ENCODE measurements at regions of chr20 and their contacts with region 1.

Region 1: DNA sequence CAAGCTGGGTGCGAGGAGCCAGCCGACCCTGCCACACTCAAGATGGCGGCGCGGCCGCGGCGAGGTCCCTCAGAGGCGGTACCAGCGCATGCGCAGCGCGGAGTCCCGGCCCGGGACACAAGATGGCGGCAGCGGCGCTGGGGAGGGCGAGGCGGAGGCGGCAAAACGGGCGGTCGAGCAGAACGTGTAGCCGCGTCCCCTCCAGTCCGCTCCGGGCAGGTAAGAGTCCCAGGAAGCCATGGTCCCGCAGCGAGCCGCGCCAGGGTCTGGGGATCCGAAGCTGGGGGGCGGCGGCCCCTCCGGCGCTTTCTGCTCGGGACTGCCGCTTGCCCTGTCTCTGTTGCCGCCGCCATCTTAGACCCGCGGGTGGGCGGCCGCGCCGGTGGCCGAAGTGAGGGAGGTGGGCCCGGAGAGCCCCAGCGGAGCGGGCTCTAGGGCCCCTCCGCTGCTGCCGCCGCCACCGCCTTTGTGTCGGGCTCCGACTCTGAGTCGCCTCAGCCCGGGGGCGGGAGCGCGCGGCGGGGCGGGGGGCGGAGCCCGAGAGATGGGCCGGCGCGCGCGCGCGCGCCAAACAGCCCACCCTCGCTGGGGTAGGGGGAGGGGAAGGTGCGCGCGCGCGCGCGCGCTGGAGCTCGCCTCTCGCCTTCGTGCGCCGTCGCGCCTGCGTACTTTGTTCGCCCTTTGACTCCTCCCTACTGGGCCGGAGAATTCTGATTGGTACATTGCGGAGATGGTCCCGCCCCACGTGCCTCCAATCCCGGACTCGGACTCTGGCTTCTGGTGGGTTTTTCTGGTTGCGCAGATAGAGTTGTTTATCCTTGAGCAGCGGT is at the start of gene PCIF1:
- DNase-seq: peak; percentile 91 to 99
- H3K4me3 ChIP-seq: peak within 1 kb of the TSS; percentile 76 to 91 (median 86)
- H3K27ac ChIP-seq: peak within 1 kb of the TSS; percentile 100
- H3K4me1 ChIP-seq: peaks cover 5 to 31% (median 14%) of the 10 kb centered on the region in 4 experiments
- H3K27me3 ChIP-seq: no peaks in the 10 kb centered on the region
- CTCF ChIP-seq: no peak; a peak in 1 of 4 replicates
- EP300 ChIP-seq: peak in 1 of 2 experiments; percentile 21; a peak in 1 of 3 replicates
- POLR2A ChIP-seq: peak; percentile 94 to 95
- RAD21 ChIP-seq: no peak
- total RNA-seq, gene PCIF1: 27.2 and 30.3 TPM in 2 replicates

Region 2: GRCh38 chr20:45798935-45799642 is 135.7 kb before region 1 on chr20:
- CTCF ChIA-PET with region 1: interaction called, 17 read pairs
- POLR2A ChIA-PET with region 1: interaction called, 3 read pairs
- DNase-seq: peak; percentile 36 to 81
- H3K4me3 ChIP-seq: no peak overlapping the region
- H3K27ac ChIP-seq: no peak overlapping the region
- H3K4me1 ChIP-seq: no peaks in the 10 kb centered on the region; a peak in 1 of 7 replicates
- H3K27me3 ChIP-seq: no peaks in the 10 kb centered on the region
- CTCF ChIP-seq: peak; percentile 67 to 90 (median 82)
- EP300 ChIP-seq: no peak
- POLR2A ChIP-seq: no peak
- RAD21 ChIP-seq: peak; percentile 68 to 83

Region 3: GRCh38 chr20:45842169-45842812 is 92.5 kb before region 1 on chr20:
- CTCF ChIA-PET with region 1: no interaction called
- POLR2A ChIA-PET with region 1: interaction called, 11 read pairs
- DNase-seq: no peak
- H3K4me3 ChIP-seq: no peak overlapping the region
- H3K27ac ChIP-seq: no peak overlapping the region
- H3K4me1 ChIP-seq: no peaks in the 10 kb centered on the region
- H3K27me3 ChIP-seq: no peaks in the 10 kb centered on the region
- CTCF ChIP-seq: no peak
- EP300 ChIP-seq: no peak
- POLR2A ChIP-seq: no peak
- RAD21 ChIP-seq: no peak

Region 4: DNA sequence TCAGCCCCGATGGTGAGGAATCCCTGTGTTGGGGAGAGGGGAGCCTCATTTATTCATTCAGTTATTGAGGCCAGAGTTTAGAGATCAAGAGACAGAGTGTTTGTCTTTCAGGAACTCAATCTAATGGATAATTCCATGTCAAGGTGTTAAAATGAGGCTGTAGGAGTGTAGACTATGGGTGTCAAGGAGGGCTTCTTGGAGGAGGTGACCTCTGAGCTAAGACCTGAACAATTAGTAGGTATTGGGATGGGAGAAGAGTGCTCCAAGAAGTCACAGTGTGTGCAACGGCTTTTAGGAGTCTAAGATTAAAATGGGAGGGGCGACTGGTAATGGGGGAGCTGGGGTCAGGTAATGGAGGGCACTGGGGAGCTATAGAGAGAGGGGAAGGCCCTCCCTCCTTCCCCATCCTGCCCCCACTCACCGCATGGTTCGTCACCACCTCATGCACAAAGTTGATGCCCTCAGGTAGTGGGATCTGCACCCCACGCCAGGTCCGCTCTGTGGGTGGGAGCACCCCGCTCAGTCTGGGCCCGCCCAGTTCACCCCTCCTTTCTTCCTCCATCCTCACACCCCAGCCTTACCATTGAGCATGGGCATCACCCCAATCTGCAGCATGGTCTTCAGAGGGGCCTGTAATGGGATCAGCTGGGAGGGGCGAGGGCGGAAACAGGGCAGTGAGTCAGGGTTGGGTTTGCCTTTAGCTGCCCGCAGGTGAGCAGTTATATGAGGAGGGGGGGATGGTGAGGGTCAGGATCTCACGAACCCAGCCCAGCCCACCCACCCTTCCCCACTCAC is 35.6 kb before region 1 on chr20:
- CTCF ChIA-PET with region 1: no interaction called
- POLR2A ChIA-PET with region 1: interaction called, 40 read pairs
- DNase-seq: no peak
- H3K4me3 ChIP-seq: no peak overlapping the region
- H3K27ac ChIP-seq: no peak overlapping the region
- H3K4me1 ChIP-seq: no peaks in the 10 kb centered on the region
- H3K27me3 ChIP-seq: no peaks in the 10 kb centered on the region
- CTCF ChIP-seq: no peak
- EP300 ChIP-seq: no peak
- POLR2A ChIP-seq: no peak
- RAD21 ChIP-seq: no peak

Region 5: GRCh38 chr20:45924391-45925261 is 10.2 kb before region 1 on chr20:
- CTCF ChIA-PET with region 1: interaction called, 4 read pairs
- POLR2A ChIA-PET with region 1: interaction called, 165 read pairs
- DNase-seq: no peak
- H3K4me3 ChIP-seq: no peak overlapping the region
- H3K27ac ChIP-seq: no peak overlapping the region
- H3K4me1 ChIP-seq: peaks cover 3 to 7% (median 5%) of the 10 kb centered on the region in 4 experiments; a peak in 5 of 7 replicates
- H3K27me3 ChIP-seq: no peaks in the 10 kb centered on the region
- CTCF ChIP-seq: no peak
- EP300 ChIP-seq: no peak
- POLR2A ChIP-seq: no peak
- RAD21 ChIP-seq: no peak

Region 6: DNA sequence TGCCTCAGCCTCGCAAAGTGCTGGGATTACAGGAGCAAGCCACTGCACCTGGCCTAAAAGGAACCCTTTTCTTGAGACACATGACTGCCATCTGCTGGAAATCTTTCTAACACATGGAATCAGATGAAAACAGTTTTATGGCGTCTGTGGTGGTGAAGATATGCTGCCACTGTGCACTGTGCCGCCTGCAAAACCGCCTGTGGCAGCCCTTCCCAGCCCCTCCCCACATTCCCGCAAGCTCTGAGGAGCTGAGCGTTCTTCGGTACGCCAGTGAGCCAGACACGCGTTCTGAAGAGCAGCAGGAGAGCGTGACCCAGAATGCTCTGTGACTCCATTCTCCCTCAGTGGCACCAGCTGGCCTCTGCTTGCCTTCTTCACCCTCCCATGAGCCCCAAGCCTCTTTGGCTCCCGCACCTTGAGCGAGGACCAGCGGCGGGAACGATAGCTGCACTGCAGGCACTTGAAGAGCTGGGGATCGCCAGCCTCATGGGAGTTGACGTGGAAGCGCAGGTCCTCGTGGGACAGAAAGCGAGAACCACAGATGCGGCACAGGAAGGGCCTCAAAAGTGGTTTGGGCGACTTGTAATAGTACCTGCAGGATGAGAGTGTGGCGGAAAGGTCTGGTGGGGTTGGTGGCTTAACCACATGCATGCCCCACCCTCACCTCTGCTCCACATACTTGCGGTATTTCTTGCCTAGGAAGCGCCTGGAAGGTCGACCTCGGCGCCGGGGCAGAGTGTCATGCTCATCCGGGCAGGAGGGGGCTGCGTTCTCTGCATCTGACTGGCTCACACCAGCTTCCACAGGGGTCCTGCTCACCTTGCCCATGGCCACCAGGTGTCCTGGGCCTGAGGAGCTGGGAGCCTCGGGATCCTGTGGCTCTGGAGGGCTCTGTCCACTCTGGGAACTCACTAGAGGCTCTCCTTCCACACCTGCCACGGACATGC is 28.5 kb after region 1 on chr20:
- CTCF ChIA-PET with region 1: interaction called, 9 read pairs
- POLR2A ChIA-PET with region 1: interaction called, 43 read pairs
- DNase-seq: no peak
- H3K4me3 ChIP-seq: no peak overlapping the region
- H3K27ac ChIP-seq: no peak overlapping the region
- H3K4me1 ChIP-seq: no peaks in the 10 kb centered on the region
- H3K27me3 ChIP-seq: no peaks in the 10 kb centered on the region
- CTCF ChIP-seq: peak in 2 of 3 experiments; percentile 37 to 47; a peak in 2 of 4 replicates
- EP300 ChIP-seq: no peak
- POLR2A ChIP-seq: no peak
- RAD21 ChIP-seq: peak; percentile 56 to 66

Measured in H1 (cell line).